AG04449 (cell line): ENCODE measurements at regions of chr10 and their contacts with region 1.

Region 1: GRCh38 chr10:117496616-117497028 is 45.9 kb upstream of the EMX2 start:
- DNase-seq: peak; percentile 40
- H3K4me3 ChIP-seq: no peak overlapping the region
- CTCF ChIP-seq: peak; percentile 88

Region 2: DNA sequence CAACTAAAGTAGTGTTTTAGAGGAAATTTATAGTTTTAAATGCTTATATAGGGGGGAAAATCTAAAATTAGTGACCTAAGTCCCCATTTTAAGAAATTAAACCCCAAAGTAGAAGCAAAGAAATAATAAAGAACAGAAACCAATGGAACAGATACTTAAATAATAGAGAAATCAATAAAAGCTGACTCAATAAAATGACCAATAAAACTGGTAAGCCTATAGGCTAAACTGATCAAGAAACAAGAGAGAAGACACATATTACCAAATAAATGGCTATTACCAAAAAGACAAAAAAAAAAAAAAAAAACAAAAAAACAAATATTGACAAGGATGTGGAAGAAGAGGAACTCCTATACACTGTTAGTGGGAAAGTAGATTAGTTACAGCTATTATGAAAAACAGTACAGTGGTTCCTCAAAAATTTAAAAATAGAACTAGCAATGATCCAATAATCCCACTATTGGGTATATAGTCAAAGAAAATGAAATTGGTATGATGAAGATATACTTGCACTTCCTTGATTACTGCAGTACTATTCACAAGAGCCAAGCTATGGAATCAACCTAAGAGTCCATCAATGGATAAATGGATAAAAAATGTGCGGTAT is 202.5 kb before region 1 on chr10:
- CTCF ChIA-PET with region 1: no interaction called
- POLR2A ChIA-PET with region 1: no interaction called
- DNase-seq: no peak
- H3K4me3 ChIP-seq: no peak overlapping the region
- CTCF ChIP-seq: no peak

Region 3: DNA sequence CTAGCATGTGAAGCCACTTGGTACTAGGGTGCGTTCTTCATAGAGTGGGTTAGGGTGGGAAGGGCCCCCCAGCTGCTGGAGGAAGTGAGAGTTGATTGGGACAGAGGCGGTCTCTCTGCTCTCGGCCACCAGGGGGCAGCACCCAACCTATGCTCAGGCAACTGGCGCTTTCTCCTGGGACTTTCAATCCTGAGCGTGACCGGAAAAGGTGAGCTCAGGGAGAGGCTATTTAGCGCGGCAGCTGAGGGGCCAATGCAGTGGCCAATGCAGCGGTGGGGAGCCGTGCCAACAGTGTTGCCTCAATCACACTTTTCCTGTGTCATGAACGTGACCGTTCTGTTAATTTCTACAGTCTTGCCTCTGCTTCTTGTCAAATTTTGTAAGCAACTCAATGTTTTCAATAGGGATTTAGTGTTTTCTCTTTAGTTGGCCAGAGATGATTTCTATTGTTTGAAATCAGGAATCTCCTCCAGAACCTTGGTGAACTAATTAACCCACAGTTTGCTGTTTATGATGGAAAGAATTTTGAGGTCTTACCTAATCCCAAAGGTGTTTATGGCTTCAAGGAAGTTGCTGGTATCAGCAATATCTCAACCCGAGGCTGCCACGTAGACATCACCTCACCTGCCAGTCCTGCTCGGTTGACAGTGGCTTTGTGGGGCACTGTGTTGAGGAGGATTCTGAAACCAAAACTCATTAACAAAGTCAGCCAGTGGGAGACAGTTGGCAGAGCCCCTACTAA is 53.5 kb before region 1 on chr10:
- CTCF ChIA-PET with region 1: interaction called, 24 read pairs
- POLR2A ChIA-PET with region 1: no interaction called
- DNase-seq: no peak
- H3K4me3 ChIP-seq: peak overlapping the region; percentile 27
- CTCF ChIP-seq: peak; percentile 95

Region 4: GRCh38 chr10:117477961-117478670 is 18.5 kb before region 1 on chr10:
- CTCF ChIA-PET with region 1: interaction called, 29 read pairs
- POLR2A ChIA-PET with region 1: interaction called, 3 read pairs
- DNase-seq: peak; percentile 82
- H3K4me3 ChIP-seq: no peak overlapping the region
- CTCF ChIP-seq: peak; percentile 35

Region 5: GRCh38 chr10:117516681-117517080 is 20.1 kb after region 1 on chr10:
- CTCF ChIA-PET with region 1: interaction called, 10 read pairs
- POLR2A ChIA-PET with region 1: no interaction called
- DNase-seq: no peak
- H3K4me3 ChIP-seq: no peak overlapping the region
- CTCF ChIP-seq: no peak

Region 6: GRCh38 chr10:118241229-118242137 is 744.9 kb after region 1 on chr10:
- CTCF ChIA-PET with region 1: interaction called, 106 read pairs
- POLR2A ChIA-PET with region 1: no interaction called
- DNase-seq: peak; percentile 40
- H3K4me3 ChIP-seq: no peak overlapping the region
- CTCF ChIP-seq: peak; percentile 83

Region 7: DNA sequence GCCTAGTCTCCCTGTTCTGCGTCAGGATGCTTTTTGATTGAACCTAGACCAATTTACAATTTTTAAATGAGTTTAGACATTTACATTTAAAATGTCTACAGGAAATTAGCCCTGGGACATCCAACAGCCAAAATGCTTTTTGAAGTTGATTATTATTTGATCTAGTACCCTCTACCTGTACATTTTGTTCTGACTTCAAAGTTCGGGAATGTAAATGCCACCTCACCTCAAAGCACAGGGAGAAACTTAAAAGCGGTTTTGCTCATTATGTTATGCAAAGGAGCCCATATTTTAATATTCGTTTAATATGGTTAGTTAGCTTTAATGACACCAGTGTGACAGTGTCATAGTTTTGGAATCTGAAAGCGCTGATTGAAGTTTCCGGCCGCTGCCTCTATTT is 925.6 kb after region 1 on chr10:
- CTCF ChIA-PET with region 1: interaction called, 13 read pairs
- POLR2A ChIA-PET with region 1: no interaction called
- DNase-seq: no peak
- H3K4me3 ChIP-seq: no peak overlapping the region
- CTCF ChIP-seq: no peak